ENCODE measurements at regions of chr18 and their contacts with region 1.

Region 1: GRCh38 chr18:77132371-77133050 is at the start of gene MBP:
- DNase-seq: peak; percentile 46 to 77
- H3K4me3 ChIP-seq: peak within 1 kb of the TSS; percentile 48
- H3K4me3 Mint-ChIP-seq: peak within 1 kb of the TSS; percentile 75
- H3K27ac Mint-ChIP-seq: no peak within 1 kb of the TSS
- H3K4me1 ChIP-seq: no peaks in the 10 kb centered on the region
- H3K4me1 Mint-ChIP-seq: no peaks in the 10 kb centered on the region
- H3K27me3 ChIP-seq: no peaks in the 10 kb centered on the region
- H3K27me3 Mint-ChIP-seq: no peaks in the 10 kb centered on the region
- CTCF ChIP-seq: no peak
- total RNA-seq, gene MBP: 7.9 and 11.4 TPM in 2 replicates

Region 2: GRCh38 chr18:77087393-77088141 is 44.9 kb before region 1 on chr18:
- CTCF ChIA-PET with region 1: no interaction called
- POLR2A ChIA-PET with region 1: no interaction called
- intact Hi-C with region 1: loop called (anchors 2 kb)
- DNase-seq: no peak
- H3K4me3 ChIP-seq: no peak overlapping the region
- H3K4me3 Mint-ChIP-seq: no peak overlapping the region
- H3K27ac Mint-ChIP-seq: no peak overlapping the region
- H3K4me1 ChIP-seq: peaks cover 10% of the 10 kb centered on the region
- H3K4me1 Mint-ChIP-seq: peaks cover 16% of the 10 kb centered on the region
- H3K27me3 ChIP-seq: no peaks in the 10 kb centered on the region
- H3K27me3 Mint-ChIP-seq: no peaks in the 10 kb centered on the region
- CTCF ChIP-seq: no peak

Region 3: DNA sequence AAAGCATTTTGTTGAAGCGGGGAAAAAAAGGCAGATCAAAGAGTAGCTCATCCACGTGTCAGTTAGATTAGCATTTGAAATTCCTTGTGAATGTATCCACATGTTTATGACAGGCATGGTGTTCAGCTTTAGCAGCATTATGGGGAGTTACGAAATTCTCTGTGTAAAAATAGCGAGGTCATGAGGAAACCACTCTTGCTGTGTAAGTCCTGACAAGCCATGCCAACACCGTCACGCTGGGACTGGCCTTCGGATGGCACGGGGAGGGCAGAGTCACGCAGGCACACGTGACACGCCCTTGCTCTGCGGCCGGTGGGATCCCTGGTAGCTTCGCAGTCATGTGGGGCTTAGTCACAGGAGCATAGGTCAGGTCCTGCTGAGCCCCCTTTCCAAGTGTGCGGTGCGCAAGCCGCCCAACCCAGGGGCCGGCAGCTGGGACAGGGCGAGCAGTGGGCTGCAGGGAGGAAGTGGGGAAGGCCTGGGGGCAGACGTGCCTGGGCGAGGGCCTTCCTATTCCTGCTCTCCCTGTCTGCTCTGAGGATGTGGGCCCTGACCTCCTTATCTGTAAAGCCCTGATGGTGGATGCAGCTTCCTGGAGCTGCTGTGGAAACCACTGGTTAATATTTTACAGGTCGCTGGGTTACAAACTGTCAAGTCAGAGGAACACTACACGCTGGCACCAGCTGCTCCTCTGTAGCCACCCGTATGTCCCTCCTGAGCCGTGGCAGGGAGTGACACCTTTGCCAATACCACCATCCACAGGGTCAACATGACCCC is 17.9 kb before region 1 on chr18:
- CTCF ChIA-PET with region 1: no interaction called
- POLR2A ChIA-PET with region 1: interaction called, 9 read pairs
- intact Hi-C with region 1: loop called (anchors 2 kb)
- DNase-seq: peak; percentile 62 to 71
- H3K4me3 ChIP-seq: peak overlapping the region; percentile 12; the same call in 1 of the 2 replicates
- H3K4me3 Mint-ChIP-seq: peak overlapping the region; percentile 49
- H3K27ac Mint-ChIP-seq: peak overlapping the region; percentile 75
- H3K4me1 ChIP-seq: peaks cover 15% of the 10 kb centered on the region
- H3K4me1 Mint-ChIP-seq: peaks cover 18% of the 10 kb centered on the region
- H3K27me3 ChIP-seq: no peaks in the 10 kb centered on the region
- H3K27me3 Mint-ChIP-seq: no peaks in the 10 kb centered on the region
- CTCF ChIP-seq: no peak

Region 4: GRCh38 chr18:77165503-77166188 is 33.1 kb after region 1 on chr18:
- CTCF ChIA-PET with region 1: no interaction called
- POLR2A ChIA-PET with region 1: no interaction called
- intact Hi-C with region 1: no loop called
- DNase-seq: no peak
- H3K4me3 ChIP-seq: no peak overlapping the region
- H3K4me3 Mint-ChIP-seq: no peak overlapping the region
- H3K27ac Mint-ChIP-seq: no peak overlapping the region
- H3K4me1 ChIP-seq: no peaks in the 10 kb centered on the region
- H3K4me1 Mint-ChIP-seq: no peaks in the 10 kb centered on the region
- H3K27me3 ChIP-seq: no peaks in the 10 kb centered on the region
- H3K27me3 Mint-ChIP-seq: peaks cover 4% of the 10 kb centered on the region
- CTCF ChIP-seq: no peak

Region 5: GRCh38 chr18:77191071-77191751 is 58.7 kb after region 1 on chr18:
- CTCF ChIA-PET with region 1: no interaction called
- POLR2A ChIA-PET with region 1: no interaction called
- intact Hi-C with region 1: no loop called
- DNase-seq: no peak
- H3K4me3 ChIP-seq: no peak overlapping the region
- H3K4me3 Mint-ChIP-seq: no peak overlapping the region
- H3K27ac Mint-ChIP-seq: no peak overlapping the region
- H3K4me1 ChIP-seq: no peaks in the 10 kb centered on the region
- H3K4me1 Mint-ChIP-seq: no peaks in the 10 kb centered on the region
- H3K27me3 ChIP-seq: no peaks in the 10 kb centered on the region
- H3K27me3 Mint-ChIP-seq: no peaks in the 10 kb centered on the region
- CTCF ChIP-seq: no peak

Region 6: DNA sequence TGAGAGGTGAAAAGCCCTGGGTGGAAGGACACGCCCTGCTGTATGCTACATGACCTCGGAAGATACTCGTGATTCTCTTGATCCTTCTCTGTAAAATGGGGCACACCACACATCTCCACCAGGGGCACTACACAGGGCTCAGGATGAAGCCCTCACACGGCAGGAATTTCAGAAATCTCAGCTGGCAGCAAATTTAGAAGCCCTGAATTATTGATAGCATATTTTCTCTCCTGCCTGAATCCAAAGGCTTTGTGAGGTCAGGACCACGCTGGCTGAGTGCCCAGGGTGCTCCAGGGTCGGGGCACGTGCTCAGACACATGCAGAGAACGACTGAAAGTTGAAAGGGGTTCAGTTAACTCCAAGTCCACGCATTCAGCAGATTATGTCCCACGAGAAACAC is 75.0 kb after region 1 on chr18:
- CTCF ChIA-PET with region 1: interaction called, 6 read pairs
- POLR2A ChIA-PET with region 1: no interaction called
- intact Hi-C with region 1: loop called (anchors 5 kb)
- DNase-seq: peak in 1 of 2 experiments; percentile 5
- H3K4me3 ChIP-seq: no peak overlapping the region
- H3K4me3 Mint-ChIP-seq: no peak overlapping the region
- H3K27ac Mint-ChIP-seq: no peak overlapping the region
- H3K4me1 ChIP-seq: no peaks in the 10 kb centered on the region
- H3K4me1 Mint-ChIP-seq: no peaks in the 10 kb centered on the region
- H3K27me3 ChIP-seq: no peaks in the 10 kb centered on the region
- H3K27me3 Mint-ChIP-seq: peaks cover 5% of the 10 kb centered on the region
- CTCF ChIP-seq: peak in 1 of 2 experiments; percentile 34

Measured in Caco-2 (cell line).